ENCODE measurements at regions of chr3 and their contacts with region 1.

Region 1: GRCh38 chr3:121592856-121593702 is at the start of gene FBXO40:
- DNase-seq: no peak
- ATAC-seq: peak; percentile 21
- H3K4me3 Mint-ChIP-seq: no peak within 1 kb of the TSS
- H3K27ac Mint-ChIP-seq: no peak within 1 kb of the TSS
- H3K4me1 Mint-ChIP-seq: peaks cover 7% of the 10 kb centered on the region
- H3K27me3 Mint-ChIP-seq: no peaks in the 10 kb centered on the region
- CTCF ChIP-seq: no peak
- total RNA-seq, gene FBXO40: not detected in 2 replicates

Region 2: DNA sequence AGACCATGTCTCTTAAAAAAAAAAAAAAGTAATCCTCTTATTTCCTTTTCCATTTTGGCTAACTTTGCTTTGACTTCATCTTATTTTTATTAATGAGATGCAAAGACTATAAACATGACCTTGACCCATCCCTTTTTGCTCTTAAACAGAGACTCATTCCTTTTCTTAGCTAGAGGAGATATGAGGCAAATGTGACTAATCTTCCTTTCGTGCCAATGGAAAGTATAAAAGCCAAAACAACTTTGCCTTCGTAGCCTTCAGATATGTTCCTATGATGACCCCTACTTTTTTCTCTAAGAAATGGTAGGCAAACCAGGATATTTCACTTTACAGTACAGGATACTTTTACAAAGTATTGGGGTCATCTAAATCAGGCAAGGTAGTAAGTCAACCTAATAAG is 193.4 kb after region 1 on chr3:
- CTCF ChIA-PET with region 1: no interaction called
- POLR2A ChIA-PET with region 1: no interaction called
- intact Hi-C with region 1: no loop called
- DNase-seq: no peak
- ATAC-seq: no peak
- H3K4me3 Mint-ChIP-seq: no peak overlapping the region
- H3K27ac Mint-ChIP-seq: peak overlapping the region; percentile 37
- H3K4me1 Mint-ChIP-seq: peaks cover 14% of the 10 kb centered on the region
- H3K27me3 Mint-ChIP-seq: no peaks in the 10 kb centered on the region
- CTCF ChIP-seq: no peak

Region 3: DNA sequence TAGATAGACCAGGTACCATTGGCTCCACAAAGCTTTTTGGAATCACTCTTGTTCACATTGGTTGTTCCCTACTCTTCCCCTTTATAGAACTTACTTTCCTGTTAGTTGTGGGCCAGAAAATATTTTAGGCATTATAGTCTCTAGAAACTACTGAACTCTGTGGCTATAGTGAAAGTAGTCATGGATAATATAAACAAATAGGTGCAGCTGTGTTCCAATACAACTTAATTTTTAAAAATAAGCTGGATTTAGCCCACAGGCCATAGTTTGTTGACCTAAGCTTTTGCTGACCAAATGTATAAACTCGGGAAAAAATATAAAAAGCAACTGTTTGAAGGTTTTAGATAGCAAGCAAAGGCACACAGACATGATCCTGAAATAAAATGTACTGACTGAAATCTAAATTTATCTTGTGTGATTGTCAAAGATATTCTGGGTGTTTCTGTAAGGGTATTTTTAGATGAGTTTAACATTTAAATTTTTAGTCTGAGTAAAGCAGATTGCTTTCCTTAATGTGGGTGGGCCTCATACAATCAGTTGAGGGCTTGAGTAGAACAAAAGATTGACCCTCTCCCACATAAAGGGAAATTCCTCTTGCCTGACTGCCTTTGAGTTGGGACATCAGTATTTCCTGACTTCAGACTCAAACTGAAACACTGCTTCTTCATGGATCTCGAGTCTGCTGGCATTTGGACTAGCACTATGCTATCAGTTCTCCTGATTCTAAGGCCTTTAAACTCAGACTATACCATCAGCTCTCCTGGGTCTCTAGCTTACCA is 228.5 kb after region 1 on chr3:
- CTCF ChIA-PET with region 1: no interaction called
- POLR2A ChIA-PET with region 1: no interaction called
- intact Hi-C with region 1: no loop called
- DNase-seq: no peak
- ATAC-seq: no peak
- H3K4me3 Mint-ChIP-seq: no peak overlapping the region
- H3K27ac Mint-ChIP-seq: no peak overlapping the region
- H3K4me1 Mint-ChIP-seq: peaks cover 42% of the 10 kb centered on the region
- H3K27me3 Mint-ChIP-seq: no peaks in the 10 kb centered on the region
- CTCF ChIP-seq: no peak

Region 4: GRCh38 chr3:122123850-122124249 is 530.8 kb after region 1 on chr3:
- CTCF ChIA-PET with region 1: no interaction called
- POLR2A ChIA-PET with region 1: interaction called, 10 read pairs
- intact Hi-C with region 1: no loop called
- DNase-seq: no peak
- ATAC-seq: no peak
- H3K4me3 Mint-ChIP-seq: no peak overlapping the region
- H3K27ac Mint-ChIP-seq: no peak overlapping the region
- H3K4me1 Mint-ChIP-seq: no peaks in the 10 kb centered on the region
- H3K27me3 Mint-ChIP-seq: no peaks in the 10 kb centered on the region
- CTCF ChIP-seq: no peak

Region 5: DNA sequence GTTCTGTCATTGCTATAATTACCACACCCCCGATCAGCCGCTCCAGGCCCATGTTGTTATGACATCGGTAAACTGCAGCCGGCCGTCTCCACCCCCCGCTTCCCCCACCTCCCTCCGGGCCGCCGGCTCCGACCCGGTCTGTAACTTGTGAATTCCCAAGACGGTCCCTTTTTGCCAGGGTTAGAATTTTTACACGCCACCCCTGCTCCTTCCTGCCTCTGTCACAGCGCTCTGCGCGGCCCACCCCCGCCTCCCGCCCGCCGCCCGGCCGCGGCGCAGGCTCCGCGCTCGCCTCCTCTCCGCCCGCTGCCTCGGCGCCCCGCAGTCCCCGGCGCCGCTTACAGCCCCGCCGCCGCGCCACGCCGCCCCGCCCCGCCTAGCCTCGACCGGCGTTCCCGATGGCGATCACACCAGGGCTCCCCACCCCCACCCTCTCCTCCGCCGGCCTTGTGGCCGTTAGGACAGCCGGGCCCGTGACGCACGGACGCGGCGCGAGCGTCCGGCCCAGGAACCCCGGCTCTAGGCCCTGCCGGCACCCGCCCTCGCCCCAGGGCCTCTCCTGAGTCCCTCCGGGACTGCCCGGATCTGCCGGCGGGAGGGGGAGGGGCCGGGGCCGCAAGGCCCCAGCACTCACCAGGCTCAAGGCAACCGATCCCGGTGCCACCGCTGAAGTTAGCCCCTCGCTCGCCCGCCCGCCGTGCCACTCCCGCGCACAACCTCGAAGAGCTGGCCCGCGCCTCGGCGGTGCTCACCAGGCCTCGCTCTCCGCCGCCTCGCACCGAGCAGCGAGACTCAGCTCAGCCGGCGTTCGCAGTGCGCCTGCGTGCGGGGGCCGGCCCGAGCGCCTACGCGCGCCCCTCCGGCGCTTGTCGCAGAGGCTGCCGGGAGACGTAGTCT is 921.3 kb after region 1 on chr3 and contains the start of gene KPNA1:
- CTCF ChIA-PET with region 1: no interaction called
- POLR2A ChIA-PET with region 1: no interaction called
- intact Hi-C with region 1: no loop called
- DNase-seq: peak; percentile 92
- ATAC-seq: peak; percentile 83
- H3K4me3 Mint-ChIP-seq: peak within 1 kb of the TSS; percentile 85
- H3K27ac Mint-ChIP-seq: peak within 1 kb of the TSS; percentile 82
- H3K4me1 Mint-ChIP-seq: peaks cover 42% of the 10 kb centered on the region
- H3K27me3 Mint-ChIP-seq: no peaks in the 10 kb centered on the region
- CTCF ChIP-seq: no peak
- total RNA-seq, gene KPNA1: 72.9 and 76.4 TPM in 2 replicates

Measured in activated B cell treated with CpG ODN at 0.5 μM for 24 hours (primary cell).